ENCODE measurements at regions of chr9 and their contacts with region 1.

Region 1: GRCh38 chr9:77456829-77457437 is 191.2 kb downstream of the GNA14 start:
- DNase-seq: peak; percentile 83
- ATAC-seq: peak; percentile 79

Region 2: DNA sequence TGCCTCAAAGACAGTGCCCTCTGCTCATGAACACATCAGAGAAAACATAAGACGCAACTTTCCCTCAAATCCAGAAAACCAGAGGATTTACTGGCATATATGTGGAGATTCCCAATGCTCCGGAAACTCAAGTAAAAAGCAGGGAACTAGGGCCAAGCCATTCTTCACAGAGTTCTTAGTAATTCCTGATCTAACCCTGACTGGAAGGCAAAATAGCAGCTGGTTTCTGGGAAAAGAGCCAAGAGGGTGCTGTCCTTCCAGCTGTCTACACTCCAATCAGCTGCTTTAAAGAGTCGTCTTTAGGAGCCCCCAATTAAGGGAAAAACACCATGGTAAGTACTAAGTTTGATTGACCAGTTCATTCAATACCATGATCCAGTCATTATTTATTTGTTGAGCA is 141.6 kb after region 1 on chr9:
- intact Hi-C with region 1: loop called (anchors 5 kb)
- DNase-seq: no peak
- ATAC-seq: peak; percentile 66

Region 3: DNA sequence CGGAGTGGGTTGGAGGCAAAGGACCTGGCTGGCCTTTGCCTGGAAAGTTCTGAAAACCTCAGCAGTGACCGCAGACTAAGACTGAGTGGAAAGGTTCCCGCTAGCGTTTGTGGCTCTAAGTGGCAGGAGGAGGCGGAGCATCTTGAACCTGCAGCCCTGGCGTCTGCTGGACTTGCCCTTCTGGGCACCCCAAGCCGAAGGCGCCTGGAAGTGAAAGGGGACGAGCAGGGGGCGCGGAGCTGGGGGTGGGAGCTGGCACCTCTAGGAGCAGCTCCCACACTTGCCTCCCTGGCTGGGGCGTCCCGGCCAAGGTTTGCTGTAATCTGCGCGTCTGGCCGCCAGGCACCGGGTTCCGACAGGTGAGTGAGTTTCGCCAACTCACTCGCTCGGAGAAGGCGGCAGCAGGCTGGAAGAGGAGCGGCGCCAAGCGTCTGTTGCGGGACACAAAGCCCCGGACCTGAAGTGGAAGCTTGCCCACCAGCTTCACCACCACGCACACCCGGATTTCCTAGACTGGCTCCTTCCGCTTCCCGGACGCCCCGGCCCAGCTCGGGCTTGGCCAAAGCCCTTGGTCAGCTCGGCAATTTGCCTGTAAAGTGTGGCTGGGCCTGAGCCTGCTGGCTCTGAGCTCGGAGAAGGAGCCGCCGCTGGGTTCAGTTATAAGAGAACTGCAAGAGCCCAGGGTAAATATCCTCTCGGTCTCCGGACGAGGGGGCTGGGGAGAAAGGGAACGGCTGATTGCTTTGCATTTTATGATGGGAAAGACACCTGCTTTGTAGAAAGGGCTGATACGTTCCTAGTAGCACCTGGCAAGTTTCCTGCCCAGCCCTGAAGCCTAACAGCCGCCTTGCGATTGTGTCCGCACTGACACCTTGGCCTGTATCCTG is 191.5 kb after region 1 on chr9 and contains the start of gene GNA14:
- intact Hi-C with region 1: loop called (anchors 2 kb)
- DNase-seq: peak; percentile 77
- ATAC-seq: peak; percentile 80
- total RNA-seq, gene GNA14: 2.6 TPM

Region 4: DNA sequence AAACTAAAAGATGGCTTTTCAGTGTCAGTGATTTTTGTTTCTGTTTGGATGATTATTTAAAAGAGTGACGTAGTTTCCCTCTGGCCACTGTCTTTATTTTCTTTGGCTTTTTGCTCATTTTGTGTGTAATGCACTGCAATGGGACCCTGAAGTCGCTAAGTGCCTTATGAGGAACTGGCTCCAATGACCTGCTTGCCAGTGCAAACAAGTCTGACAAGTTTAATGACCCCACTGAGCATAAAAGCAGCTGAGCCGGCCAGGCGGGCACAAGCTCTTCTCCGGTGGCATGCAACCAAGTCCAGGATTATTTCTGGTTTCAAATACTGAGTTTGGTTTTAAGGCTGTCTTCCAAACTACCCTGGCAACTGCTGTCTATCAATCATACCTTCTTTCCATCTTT is 206.8 kb after region 1 on chr9:
- intact Hi-C with region 1: no loop called
- DNase-seq: no peak
- ATAC-seq: peak; percentile 82

Region 5: DNA sequence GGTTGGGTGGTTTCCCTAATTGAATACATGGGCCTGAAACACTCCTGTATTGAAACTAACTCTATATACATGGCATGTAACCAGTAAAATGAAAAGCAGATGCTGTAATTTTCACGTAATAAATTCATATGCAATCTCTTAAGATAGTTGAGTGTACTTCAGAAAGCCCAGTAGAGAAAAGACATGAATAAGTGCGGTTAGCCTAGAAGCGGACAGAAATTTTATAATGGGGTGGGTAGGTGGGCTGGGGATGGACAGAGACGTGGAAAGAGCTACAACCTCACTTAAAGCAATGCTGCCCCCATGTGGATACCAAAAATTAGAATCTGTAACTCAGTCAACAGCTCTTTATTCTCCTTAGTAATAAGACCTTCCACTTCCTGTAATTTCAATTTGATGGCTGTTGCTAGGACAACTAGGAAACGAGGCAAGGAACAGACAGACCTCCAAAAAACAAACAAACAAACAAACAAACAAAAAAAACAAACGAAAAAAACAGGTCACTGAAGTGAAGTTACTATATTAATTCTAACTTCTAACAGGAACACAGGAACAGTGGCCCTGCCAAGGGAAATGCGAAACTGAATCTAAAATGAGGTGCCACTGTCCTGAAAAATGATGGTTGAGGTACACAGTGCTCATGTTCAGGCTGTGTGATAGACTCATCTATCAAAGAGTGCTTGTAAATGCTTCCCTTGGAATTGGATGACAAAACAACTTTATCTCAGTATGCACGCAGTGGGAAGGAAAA is 294.6 kb after region 1 on chr9:
- intact Hi-C with region 1: loop called (anchors 5 kb)
- DNase-seq: no peak
- ATAC-seq: peak; percentile 72

Region 6: GRCh38 chr9:77864211-77864889 is 407.4 kb after region 1 on chr9:
- intact Hi-C with region 1: no loop called
- DNase-seq: no peak
- ATAC-seq: peak; percentile 28

Region 7: GRCh38 chr9:78035383-78035993 is 578.6 kb after region 1 on chr9:
- intact Hi-C with region 1: loop called (anchors 2 kb)
- DNase-seq: peak; percentile 64
- ATAC-seq: no peak

Region 8: GRCh38 chr9:78490231-78490630 is 1033.3 kb after region 1 on chr9:
- intact Hi-C with region 1: no loop called
- DNase-seq: no peak
- ATAC-seq: no peak